ENCODE measurements at regions of chr3 and their contacts with region 1.

Region 1: GRCh38 chr3:153221748-153222162 is 59.7 kb downstream of the RAP2B start:
- DNase-seq: peak; percentile 95
- H3K4me3 ChIP-seq: peak overlapping the region in 1 of 3 experiments; percentile 39
- H3K27ac ChIP-seq: peak overlapping the region; percentile 70
- H3K4me1 ChIP-seq: peaks cover 29% of the 10 kb centered on the region
- H3K27me3 ChIP-seq: no peaks in the 10 kb centered on the region
- CTCF ChIP-seq: no peak
- POLR2A ChIP-seq: peak; percentile 91

Region 2: DNA sequence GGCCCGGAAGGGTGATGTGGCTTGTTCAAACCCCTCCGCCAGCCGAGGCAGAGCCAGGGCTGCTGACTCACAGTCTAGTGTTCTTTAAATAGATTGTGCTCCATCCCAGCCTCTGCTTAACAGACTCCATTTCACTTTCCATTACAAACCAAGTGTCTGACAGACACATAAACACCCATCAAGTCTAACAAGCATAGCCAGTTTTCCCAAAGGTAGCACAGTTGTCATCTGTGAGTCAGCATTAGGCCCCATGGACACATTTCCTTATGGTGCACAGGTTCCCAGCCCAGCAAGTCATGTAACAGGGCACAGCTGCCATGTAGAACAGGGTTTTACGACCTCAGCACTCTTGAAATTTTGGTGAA is 169.7 kb before region 1 on chr3:
- CTCF ChIA-PET with region 1: interaction called, 7 read pairs
- POLR2A ChIA-PET with region 1: no interaction called
- dilution Hi-C with region 1: no loop called
- intact Hi-C with region 1: loop called (anchors 1 kb)
- DNase-seq: peak; percentile 91
- H3K4me3 ChIP-seq: no peak overlapping the region
- H3K27ac ChIP-seq: peak overlapping the region; percentile 95
- H3K4me1 ChIP-seq: peaks cover 22% of the 10 kb centered on the region
- H3K27me3 ChIP-seq: no peaks in the 10 kb centered on the region
- CTCF ChIP-seq: no peak
- POLR2A ChIP-seq: no peak

Region 3: GRCh38 chr3:153138276-153139210 is 83.2 kb before region 1 on chr3:
- CTCF ChIA-PET with region 1: no interaction called
- POLR2A ChIA-PET with region 1: no interaction called
- dilution Hi-C with region 1: no loop called
- intact Hi-C with region 1: loop called (anchors 1 kb)
- DNase-seq: peak; percentile 97
- H3K4me3 ChIP-seq: no peak overlapping the region
- H3K27ac ChIP-seq: peak overlapping the region; percentile 97
- H3K4me1 ChIP-seq: peaks cover 30% of the 10 kb centered on the region
- H3K27me3 ChIP-seq: no peaks in the 10 kb centered on the region
- CTCF ChIP-seq: no peak
- POLR2A ChIP-seq: peak; percentile 49

Region 4: DNA sequence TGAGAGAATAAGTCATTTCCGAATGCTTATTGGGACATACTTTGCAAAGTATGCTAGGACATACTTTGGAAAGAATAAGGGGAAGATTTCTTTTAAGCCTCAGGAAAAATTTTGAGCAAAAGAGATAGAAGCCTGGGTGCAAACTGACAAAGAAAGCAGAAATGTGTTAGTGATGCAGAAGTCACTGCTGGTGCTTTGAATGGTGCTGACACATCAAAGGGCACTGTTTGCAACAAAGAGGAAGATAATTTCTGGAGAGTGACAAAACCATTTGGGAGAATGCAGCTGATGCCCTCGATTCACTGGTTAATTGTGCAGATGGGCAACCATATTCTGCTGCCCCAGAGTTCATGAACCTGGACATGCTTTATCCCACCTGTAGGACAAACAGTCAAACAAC is 70.8 kb before region 1 on chr3:
- CTCF ChIA-PET with region 1: no interaction called
- POLR2A ChIA-PET with region 1: no interaction called
- dilution Hi-C with region 1: no loop called
- intact Hi-C with region 1: no loop called
- DNase-seq: no peak
- H3K4me3 ChIP-seq: no peak overlapping the region
- H3K27ac ChIP-seq: no peak overlapping the region
- H3K4me1 ChIP-seq: no peaks in the 10 kb centered on the region
- H3K27me3 ChIP-seq: no peaks in the 10 kb centered on the region
- CTCF ChIP-seq: no peak
- POLR2A ChIP-seq: no peak

Region 5: DNA sequence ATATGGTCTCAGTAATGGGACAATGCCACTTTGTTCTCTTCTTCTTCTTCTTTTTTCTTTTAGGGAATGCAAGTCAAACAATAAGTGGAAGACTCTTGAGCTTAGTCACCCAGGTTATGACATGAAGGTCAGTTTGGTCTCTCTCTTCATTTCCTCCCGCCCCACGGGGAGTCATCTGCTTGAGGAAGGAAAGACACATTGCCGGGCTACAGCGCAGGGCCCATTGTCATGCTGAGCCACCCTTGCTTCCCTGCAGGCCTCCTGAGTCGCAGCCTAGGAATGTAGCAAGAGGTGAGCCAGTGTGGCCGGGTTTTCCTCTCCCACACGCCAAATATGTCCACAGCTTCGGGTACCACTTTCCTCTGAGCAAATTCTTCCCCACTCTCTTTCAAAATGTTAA is 12.2 kb before region 1 on chr3:
- CTCF ChIA-PET with region 1: interaction called, 6 read pairs
- POLR2A ChIA-PET with region 1: no interaction called
- dilution Hi-C with region 1: no loop called
- intact Hi-C with region 1: loop called (anchors 1 kb)
- DNase-seq: peak; percentile 59
- H3K4me3 ChIP-seq: no peak overlapping the region
- H3K27ac ChIP-seq: peak overlapping the region; percentile 63
- H3K4me1 ChIP-seq: peaks cover 20% of the 10 kb centered on the region
- H3K27me3 ChIP-seq: no peaks in the 10 kb centered on the region
- CTCF ChIP-seq: no peak
- POLR2A ChIP-seq: no peak

Region 6: GRCh38 chr3:153252963-153253362 is 31.2 kb after region 1 on chr3:
- CTCF ChIA-PET with region 1: interaction called, 3 read pairs
- POLR2A ChIA-PET with region 1: no interaction called
- dilution Hi-C with region 1: no loop called
- intact Hi-C with region 1: loop called (anchors 1 kb)
- DNase-seq: no peak
- H3K4me3 ChIP-seq: no peak overlapping the region
- H3K27ac ChIP-seq: no peak overlapping the region
- H3K4me1 ChIP-seq: peaks cover 21% of the 10 kb centered on the region
- H3K27me3 ChIP-seq: no peaks in the 10 kb centered on the region
- CTCF ChIP-seq: no peak
- POLR2A ChIP-seq: no peak

Region 7: GRCh38 chr3:153284282-153284938 is 62.7 kb after region 1 on chr3:
- CTCF ChIA-PET with region 1: interaction called, 3 read pairs
- POLR2A ChIA-PET with region 1: no interaction called
- dilution Hi-C with region 1: no loop called
- intact Hi-C with region 1: loop called (anchors 5 kb)
- DNase-seq: peak; percentile 73
- H3K4me3 ChIP-seq: no peak overlapping the region
- H3K27ac ChIP-seq: peak overlapping the region; percentile 35
- H3K4me1 ChIP-seq: peaks cover 15% of the 10 kb centered on the region
- H3K27me3 ChIP-seq: no peaks in the 10 kb centered on the region
- CTCF ChIP-seq: no peak
- POLR2A ChIP-seq: no peak

Region 8: DNA sequence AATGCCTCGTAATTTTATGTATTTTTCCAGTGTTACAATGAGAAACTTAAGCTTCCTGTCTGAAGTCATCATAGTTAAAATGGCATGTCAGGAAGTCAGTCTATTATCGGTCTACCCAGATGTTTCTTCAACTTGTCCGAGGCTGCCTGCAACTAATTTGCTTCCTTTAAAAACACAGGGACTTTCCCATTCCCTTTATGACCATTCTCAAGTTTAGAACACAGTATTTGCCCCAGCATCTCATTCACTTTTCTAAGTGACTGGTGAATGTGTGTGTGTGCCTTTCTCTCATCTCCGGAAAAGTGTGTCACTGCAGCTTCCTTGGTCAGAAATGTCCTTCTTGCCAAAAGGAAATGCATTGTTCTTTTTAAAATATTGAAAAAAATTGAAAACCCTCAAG is 406.8 kb after region 1 on chr3:
- CTCF ChIA-PET with region 1: no interaction called
- POLR2A ChIA-PET with region 1: no interaction called
- dilution Hi-C with region 1: no loop called
- intact Hi-C with region 1: loop called (anchors 1 kb)
- DNase-seq: peak; percentile 98
- H3K4me3 ChIP-seq: no peak overlapping the region
- H3K27ac ChIP-seq: peak overlapping the region; percentile 98
- H3K4me1 ChIP-seq: peaks cover 61% of the 10 kb centered on the region
- H3K27me3 ChIP-seq: no peaks in the 10 kb centered on the region
- CTCF ChIP-seq: no peak
- POLR2A ChIP-seq: no peak